MCF 10A (cell line): ENCODE measurements at regions of chr3 and their contacts with region 1.

Region 1: GRCh38 chr3:70933105-70933810 is 620.8 kb upstream of the MDFIC2 start:
- DNase-seq: no peak
- H3K4me3 Mint-ChIP-seq: no peak overlapping the region
- H3K27ac Mint-ChIP-seq: no peak overlapping the region
- H3K4me1 Mint-ChIP-seq: no peaks in the 10 kb centered on the region
- H3K27me3 Mint-ChIP-seq: peaks cover 18% of the 10 kb centered on the region
- CTCF ChIP-seq: no peak

Region 2: GRCh38 chr3:70889162-70890019 is 43.9 kb before region 1 on chr3:
- CTCF ChIA-PET with region 1: no interaction called
- POLR2A ChIA-PET with region 1: no interaction called
- intact Hi-C with region 1: no loop called
- DNase-seq: no peak
- H3K4me3 Mint-ChIP-seq: no peak overlapping the region
- H3K27ac Mint-ChIP-seq: no peak overlapping the region
- H3K4me1 Mint-ChIP-seq: no peaks in the 10 kb centered on the region
- H3K27me3 Mint-ChIP-seq: no peaks in the 10 kb centered on the region
- CTCF ChIP-seq: no peak

Region 3: DNA sequence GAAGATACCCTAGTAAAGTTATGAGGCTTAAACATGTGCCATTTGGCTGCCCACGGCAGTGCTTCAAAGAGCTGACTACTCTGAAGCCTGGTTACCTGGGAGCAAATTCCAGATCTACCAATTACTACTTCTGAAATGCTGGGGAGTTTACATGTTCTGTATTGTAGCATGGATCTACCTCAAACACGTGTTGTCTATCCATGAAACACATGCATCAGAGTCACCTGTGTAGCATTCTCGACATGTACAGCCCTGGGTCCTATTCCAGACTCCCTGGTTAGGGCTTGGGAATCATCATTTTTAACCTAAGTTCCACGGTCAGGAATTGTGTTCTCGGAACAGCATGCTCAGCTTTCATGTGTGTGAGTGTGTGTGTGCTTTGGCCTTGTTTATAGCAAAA is 21.5 kb before region 1 on chr3:
- CTCF ChIA-PET with region 1: no interaction called
- POLR2A ChIA-PET with region 1: no interaction called
- intact Hi-C with region 1: loop called (anchors 1 kb)
- DNase-seq: no peak
- H3K4me3 Mint-ChIP-seq: no peak overlapping the region
- H3K27ac Mint-ChIP-seq: no peak overlapping the region
- H3K4me1 Mint-ChIP-seq: no peaks in the 10 kb centered on the region
- H3K27me3 Mint-ChIP-seq: peaks cover 54% of the 10 kb centered on the region
- CTCF ChIP-seq: no peak